HCT116 (cell line): ENCODE measurements at regions of chr6 and their contacts with region 1.

Region 1: GRCh38 chr6:127539272-127539671 is 20.1 kb upstream of the MTCL3 start:
- DNase-seq: no peak
- ATAC-seq: peak; percentile 61; the same call in 1 of the 2 replicates
- H3K4me3 ChIP-seq: no peak overlapping the region
- H3K27ac ChIP-seq: no peak overlapping the region
- H3K4me1 ChIP-seq: no peaks in the 10 kb centered on the region
- H3K27me3 ChIP-seq: no peaks in the 10 kb centered on the region
- CTCF ChIP-seq: peak in 2 of 3 experiments; percentile 28 to 73; a peak in 3 of 6 replicates
- POLR2A ChIP-seq: no peak
- RAD21 ChIP-seq: peak; percentile 75

Region 2: DNA sequence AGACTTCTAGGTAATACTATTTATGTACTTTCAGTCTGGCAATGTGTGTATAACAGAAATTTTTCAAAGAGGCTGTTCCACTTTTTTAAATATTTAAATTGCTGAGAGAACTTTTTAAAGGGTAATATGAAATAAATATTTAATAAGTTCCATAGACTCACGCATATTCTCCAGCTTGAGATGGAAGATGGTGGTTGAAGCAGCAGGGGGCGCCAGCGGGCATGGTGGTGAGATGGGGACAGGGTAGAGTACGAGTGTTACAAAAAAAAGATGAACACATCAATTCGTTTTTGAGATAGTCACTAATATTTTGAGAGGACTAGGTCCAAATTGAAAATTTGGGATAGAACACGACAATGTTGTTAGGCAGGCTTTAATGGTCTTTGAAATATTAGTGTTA is 352.4 kb before region 1 on chr6:
- CTCF ChIA-PET with region 1: interaction called, 23 read pairs
- POLR2A ChIA-PET with region 1: no interaction called
- RAD21 ChIA-PET with region 1: interaction called in 1 of 2 experiments, 5 read pairs
- intact Hi-C with region 1: loop called (anchors 2 kb)
- DNase-seq: peak; percentile 37
- ATAC-seq: peak; percentile 88
- H3K4me3 ChIP-seq: no peak overlapping the region
- H3K27ac ChIP-seq: no peak overlapping the region
- H3K4me1 ChIP-seq: no peaks in the 10 kb centered on the region
- H3K27me3 ChIP-seq: no peaks in the 10 kb centered on the region
- CTCF ChIP-seq: peak; percentile 40 to 80 (median 73); a peak in 5 of 6 replicates
- POLR2A ChIP-seq: no peak
- RAD21 ChIP-seq: peak; percentile 57

Region 3: DNA sequence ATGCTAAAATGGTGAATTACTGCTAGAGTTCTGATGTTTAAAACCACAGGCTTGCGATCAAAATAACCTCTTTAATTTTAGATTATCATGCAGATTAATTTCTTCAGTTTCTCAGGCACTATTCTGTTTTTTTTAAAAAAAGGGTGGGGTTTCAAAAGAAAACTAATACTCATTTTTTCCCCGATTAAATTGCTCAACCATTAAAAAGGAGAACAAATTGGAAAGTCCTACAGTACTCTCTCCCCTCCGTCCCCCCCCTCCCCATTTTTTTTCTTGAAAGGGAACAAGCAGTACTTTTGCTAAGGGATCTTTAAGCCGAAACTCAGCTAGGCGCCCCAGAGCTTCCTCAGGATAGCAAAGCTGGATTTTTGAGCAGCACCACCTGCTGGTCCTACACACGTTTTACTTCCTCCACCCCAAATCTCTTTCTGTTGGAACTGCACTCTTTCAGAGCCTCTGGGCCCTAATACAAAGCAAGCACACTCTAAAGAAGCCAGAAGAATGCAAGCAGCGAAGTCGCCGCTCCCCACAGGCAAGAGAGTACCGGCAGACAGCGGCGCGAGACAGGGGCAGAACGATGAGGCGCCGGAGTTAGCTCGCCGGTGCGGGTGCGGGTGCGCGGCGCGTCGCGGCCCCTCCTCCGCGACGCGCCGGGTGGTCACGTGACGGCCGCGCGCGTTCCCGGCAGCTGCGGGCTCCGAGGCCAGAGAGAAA is 272.9 kb before region 1 on chr6 and contains the start of gene RNF146:
- CTCF ChIA-PET with region 1: interaction called, 10 read pairs
- POLR2A ChIA-PET with region 1: interaction called, 3 read pairs
- RAD21 ChIA-PET with region 1: interaction called in 1 of 2 experiments, 4 read pairs
- intact Hi-C with region 1: no loop called
- DNase-seq: peak; percentile 75
- ATAC-seq: peak; percentile 84
- H3K4me3 ChIP-seq: peak within 1 kb of the TSS; percentile 75 to 76
- H3K27ac ChIP-seq: peak within 1 kb of the TSS; percentile 90
- H3K4me1 ChIP-seq: peaks cover 3 to 13% of the 10 kb centered on the region in 2 experiments; a peak in 3 of 4 replicates
- H3K27me3 ChIP-seq: no peaks in the 10 kb centered on the region
- CTCF ChIP-seq: peak; percentile 64 to 74 (median 70); a peak in 5 of 6 replicates
- POLR2A ChIP-seq: peak; percentile 79
- RAD21 ChIP-seq: peak; percentile 52
- total RNA-seq, gene RNF146: 17.6 TPM

Region 4: GRCh38 chr6:127302728-127303660 is 236.3 kb before region 1 on chr6:
- CTCF ChIA-PET with region 1: interaction called, 24 read pairs
- POLR2A ChIA-PET with region 1: no interaction called
- RAD21 ChIA-PET with region 1: no interaction called
- intact Hi-C with region 1: loop called (anchors 1 kb)
- DNase-seq: peak; percentile 16
- ATAC-seq: peak; percentile 49; the same call in 1 of the 2 replicates
- H3K4me3 ChIP-seq: no peak overlapping the region
- H3K27ac ChIP-seq: no peak overlapping the region
- H3K4me1 ChIP-seq: no peaks in the 10 kb centered on the region
- H3K27me3 ChIP-seq: no peaks in the 10 kb centered on the region
- CTCF ChIP-seq: peak; percentile 51 to 76 (median 73); a peak in 5 of 6 replicates
- POLR2A ChIP-seq: no peak
- RAD21 ChIP-seq: peak; percentile 76

Region 5: GRCh38 chr6:127464881-127465459 is 74.3 kb before region 1 on chr6:
- CTCF ChIA-PET with region 1: interaction called, 24 read pairs
- POLR2A ChIA-PET with region 1: no interaction called
- RAD21 ChIA-PET with region 1: interaction called in 1 of 2 experiments, 8 read pairs
- intact Hi-C with region 1: loop called (anchors 1 kb)
- DNase-seq: peak; percentile 28
- ATAC-seq: peak; percentile 99
- H3K4me3 ChIP-seq: no peak overlapping the region
- H3K27ac ChIP-seq: no peak overlapping the region
- H3K4me1 ChIP-seq: no peaks in the 10 kb centered on the region
- H3K27me3 ChIP-seq: no peaks in the 10 kb centered on the region
- CTCF ChIP-seq: peak; percentile 82 to 96 (median 91)
- POLR2A ChIP-seq: no peak
- RAD21 ChIP-seq: peak; percentile 77

Region 6: DNA sequence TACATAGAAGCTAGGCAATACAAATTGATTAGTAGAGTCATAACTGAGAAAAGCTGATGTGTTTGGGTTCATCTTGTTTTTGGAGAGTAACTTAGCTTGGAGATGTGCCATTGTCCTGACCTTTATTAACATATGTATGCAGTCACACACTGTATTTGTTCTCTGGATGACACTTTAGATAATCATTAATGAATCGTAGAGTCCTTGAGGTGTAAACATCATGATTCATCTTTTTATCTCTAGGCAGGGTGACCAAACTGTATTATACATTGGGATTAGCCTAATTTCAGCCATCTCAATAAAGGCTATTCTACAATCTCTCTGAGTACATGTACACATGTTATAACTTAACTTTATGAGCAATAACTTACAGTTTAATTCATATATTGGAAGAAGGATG is 16.6 kb before region 1 on chr6:
- CTCF ChIA-PET with region 1: no interaction called
- POLR2A ChIA-PET with region 1: no interaction called
- RAD21 ChIA-PET with region 1: no interaction called
- intact Hi-C with region 1: no loop called
- DNase-seq: no peak
- ATAC-seq: no peak
- H3K4me3 ChIP-seq: no peak overlapping the region
- H3K27ac ChIP-seq: no peak overlapping the region
- H3K4me1 ChIP-seq: no peaks in the 10 kb centered on the region
- H3K27me3 ChIP-seq: no peaks in the 10 kb centered on the region
- CTCF ChIP-seq: no peak
- POLR2A ChIP-seq: no peak
- RAD21 ChIP-seq: no peak